ENCODE measurements at regions of chr9 and their contacts with region 1.

Region 1: GRCh38 chr9:38026021-38026809 is 42.8 kb downstream of the SHB start:
- DNase-seq: no peak
- H3K4me3 ChIP-seq: peak overlapping the region in 1 of 4 donors; percentile 0
- H3K27ac ChIP-seq: peak overlapping the region; percentile 78 to 83 (median 79)
- H3K4me1 ChIP-seq: peaks cover 54 to 80% (median 67%) of the 10 kb centered on the region in 4 donors
- H3K27me3 ChIP-seq: no peaks in the 10 kb centered on the region
- CTCF ChIP-seq: no peak
- EP300 ChIP-seq: no peak
- POLR2A ChIP-seq: no peak

Region 2: DNA sequence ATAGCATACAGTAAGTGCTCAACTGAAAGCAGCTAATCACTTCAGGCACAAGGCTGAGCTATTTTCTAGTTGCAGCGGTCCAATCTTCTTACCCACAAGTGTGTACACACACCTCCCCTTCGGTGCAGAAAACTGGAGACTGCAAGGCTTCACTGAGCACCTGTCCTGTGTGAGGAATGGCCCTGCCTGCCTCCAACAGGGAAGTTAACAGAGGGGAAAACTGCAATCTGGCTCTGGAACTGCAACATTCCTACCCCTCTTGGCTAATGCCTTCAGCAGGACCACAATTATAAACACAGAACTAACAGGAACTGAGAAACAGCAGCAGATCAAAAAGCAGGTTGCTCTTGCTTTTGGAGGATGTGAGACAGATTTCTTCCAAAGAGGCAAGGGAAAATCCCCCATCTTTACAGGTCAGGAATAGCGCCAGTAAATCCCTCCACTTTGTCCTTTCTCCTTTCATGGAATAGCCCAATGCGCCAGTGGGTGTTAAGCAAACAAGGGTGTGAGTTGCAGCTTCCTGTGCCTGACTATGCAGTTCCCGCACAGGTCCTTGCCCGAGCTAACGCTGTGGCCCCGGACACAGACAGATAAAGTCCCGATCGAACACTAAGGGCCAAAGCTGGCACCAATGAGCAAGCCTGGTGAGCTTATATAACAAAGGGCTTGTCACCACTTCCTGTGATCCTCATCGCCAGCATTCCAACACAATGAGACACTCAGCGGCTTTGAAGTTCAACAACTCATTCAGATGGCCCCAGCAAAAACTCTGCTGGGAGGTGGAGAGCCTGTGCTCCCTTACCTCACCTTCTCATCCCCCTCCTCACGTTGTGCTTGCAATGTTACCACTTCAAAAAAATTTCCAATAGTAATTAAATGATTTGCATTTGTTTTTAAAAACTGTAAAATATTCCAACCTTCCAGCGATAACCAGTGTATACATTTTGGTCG is 21.4 kb after region 1 on chr9:
- intact Hi-C with region 1: loop called (anchors 2 kb)
- DNase-seq: no peak
- H3K4me3 ChIP-seq: peak overlapping the region; percentile 14 to 38 (median 30)
- H3K27ac ChIP-seq: peak overlapping the region; percentile 74 to 88 (median 80)
- H3K4me1 ChIP-seq: peaks cover 47 to 59% (median 55%) of the 10 kb centered on the region in 4 donors
- H3K27me3 ChIP-seq: no peaks in the 10 kb centered on the region
- CTCF ChIP-seq: no peak
- EP300 ChIP-seq: no peak
- POLR2A ChIP-seq: no peak

Region 3: GRCh38 chr9:38068866-38069629 is 42.8 kb after region 1 on chr9 and contains the start of gene SHB:
- intact Hi-C with region 1: loop called (anchors 5 kb)
- DNase-seq: peak; percentile 96
- H3K4me3 ChIP-seq: peak within 1 kb of the TSS; percentile 89 to 99 (median 94)
- H3K27ac ChIP-seq: peak within 1 kb of the TSS; percentile 87 to 98 (median 93)
- H3K4me1 ChIP-seq: peaks cover 39 to 54% (median 50%) of the 10 kb centered on the region in 4 donors
- H3K27me3 ChIP-seq: peaks cover 0 to 4% (median 0%) of the 10 kb centered on the region in 4 donors
- CTCF ChIP-seq: peak in 2 of 3 experiments; percentile 48 to 51
- EP300 ChIP-seq: no peak
- POLR2A ChIP-seq: peak; percentile 49
- total RNA-seq, gene SHB: 16.6 to 21.2 (median 21.0) TPM

Region 4: GRCh38 chr9:38141746-38142591 is 115.8 kb after region 1 on chr9:
- intact Hi-C with region 1: no loop called
- DNase-seq: no peak
- H3K4me3 ChIP-seq: no peak overlapping the region
- H3K27ac ChIP-seq: no peak overlapping the region
- H3K4me1 ChIP-seq: peaks cover 6 to 14% (median 11%) of the 10 kb centered on the region in 4 donors
- H3K27me3 ChIP-seq: peaks cover 0 to 26% (median 0%) of the 10 kb centered on the region in 4 donors
- CTCF ChIP-seq: no peak
- EP300 ChIP-seq: no peak
- POLR2A ChIP-seq: no peak

Measured in esophagus muscularis mucosa (tissue), 4 donors.